ENCODE measurements at regions of chr2 and their contacts with region 1.

Region 1: DNA sequence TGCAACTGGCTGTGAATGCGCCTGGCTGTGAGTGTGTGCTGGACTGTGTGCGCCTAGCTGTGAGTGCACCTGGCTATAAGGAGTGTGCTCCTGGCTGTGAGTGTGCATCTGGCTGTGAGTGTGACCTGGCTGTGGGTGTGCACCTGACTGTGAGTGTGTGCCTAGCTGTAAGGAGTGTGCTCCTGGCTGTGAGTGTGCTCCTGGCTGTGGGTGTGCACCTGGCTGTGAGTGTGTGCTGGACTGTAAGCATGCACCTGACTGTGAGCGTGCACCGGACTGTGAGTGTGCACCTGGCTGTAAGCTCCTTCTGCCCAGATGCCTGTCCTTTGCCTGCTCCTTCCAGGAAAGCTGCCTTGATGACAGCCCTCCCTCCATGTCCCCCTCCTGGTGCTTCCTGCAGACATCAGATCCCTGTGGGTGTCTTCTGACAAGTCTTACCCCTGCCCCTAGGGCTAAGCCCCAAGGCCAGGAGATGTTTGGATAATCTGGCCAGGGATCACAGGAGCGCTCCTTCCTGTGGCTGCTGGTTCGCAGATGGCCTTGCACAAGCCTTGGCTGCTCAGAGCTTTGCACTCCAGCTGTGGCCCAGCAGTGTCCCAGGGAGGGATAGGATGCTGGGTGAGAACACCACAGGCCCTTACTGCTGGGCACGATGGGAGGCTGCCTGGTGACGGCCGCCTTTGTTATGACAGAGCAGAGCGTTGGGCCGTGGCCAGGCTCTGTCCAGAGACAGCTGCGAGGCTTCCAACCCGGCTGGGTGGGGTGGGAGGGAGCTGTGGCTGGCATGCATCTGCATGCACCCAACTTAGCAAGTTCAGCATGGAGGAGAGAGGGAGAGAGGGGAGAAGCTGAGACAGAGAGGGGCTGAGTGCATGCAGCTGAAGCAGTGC is 89.9 kb downstream of the GLI2 start:
- DNase-seq: peak; percentile 89
- ATAC-seq: peak; percentile 80

Region 2: GRCh38 chr2:120958623-120959366 is 133.2 kb after region 1 on chr2:
- intact Hi-C with region 1: loop called (anchors 5 kb)
- DNase-seq: peak; percentile 49
- ATAC-seq: no peak